CD4-positive, alpha-beta memory T cell (primary cell): ENCODE measurements at regions of chr10 and their contacts with region 1.

Region 1: DNA sequence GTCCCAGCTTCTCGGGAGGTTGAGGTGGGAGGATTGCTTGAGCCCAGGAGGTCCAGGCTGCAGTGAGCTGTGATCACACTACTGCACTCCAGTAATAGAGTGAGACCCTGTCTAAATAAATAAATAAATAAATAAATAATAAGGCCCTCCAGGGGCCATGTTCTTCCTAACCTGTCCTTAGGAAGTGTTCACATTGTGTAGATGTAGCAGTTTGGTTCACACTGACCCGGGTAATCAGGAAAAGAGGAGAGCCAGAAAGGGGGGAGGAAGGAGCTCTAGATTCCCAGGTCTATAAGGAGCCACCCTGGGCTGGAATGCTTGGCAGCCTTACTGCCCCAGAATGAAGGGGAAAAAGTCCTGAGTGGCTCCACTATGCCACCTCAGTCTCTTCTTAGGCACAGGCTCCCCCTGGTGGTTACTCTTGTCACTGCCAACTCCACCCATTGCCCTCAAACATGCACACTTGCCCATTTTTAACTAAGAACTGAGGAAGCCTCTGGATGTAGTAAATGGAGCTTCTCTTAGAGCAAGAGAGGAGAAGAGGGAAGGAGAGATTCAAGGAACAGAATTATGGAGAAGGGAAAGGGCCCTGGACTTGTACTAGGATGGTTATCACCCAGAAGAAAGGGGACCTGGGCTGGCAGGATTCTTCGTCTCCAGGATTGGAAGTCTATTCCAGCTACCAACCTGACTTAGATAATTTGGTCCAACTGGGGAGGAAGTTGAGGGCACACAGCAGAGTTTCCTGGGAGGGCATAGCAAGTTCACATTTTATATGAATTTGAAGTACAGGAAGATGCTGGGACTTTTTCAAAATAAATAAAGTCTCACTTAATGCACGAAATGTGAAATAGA is 7.8 kb downstream of the HPS6 start:
- DNase-seq: peak; percentile 67 to 76 (median 75)
- H3K4me3 ChIP-seq: no peak overlapping the region
- H3K4me3 Mint-ChIP-seq: no peak overlapping the region
- H3K27ac ChIP-seq: no peak overlapping the region
- H3K27ac Mint-ChIP-seq: no peak overlapping the region
- H3K4me1 ChIP-seq: peaks cover 14% of the 10 kb centered on the region
- H3K4me1 Mint-ChIP-seq: peaks cover 3 to 17% (median 7%) of the 10 kb centered on the region in 4 donors
- H3K27me3 ChIP-seq: no peaks in the 10 kb centered on the region
- H3K27me3 Mint-ChIP-seq: no peaks in the 10 kb centered on the region

Region 2: GRCh38 chr10:101889256-101890210 is 183.4 kb before region 1 on chr10:
- CTCF ChIA-PET with region 1: interaction called, 48 read pairs
- POLR2A ChIA-PET with region 1: interaction called, 3 read pairs
- intact Hi-C with region 1: loop called (anchors 1 kb)
- DNase-seq: peak; percentile 42 to 61 (median 52)
- H3K4me3 ChIP-seq: no peak overlapping the region
- H3K4me3 Mint-ChIP-seq: no peak overlapping the region
- H3K27ac ChIP-seq: no peak overlapping the region
- H3K27ac Mint-ChIP-seq: peak overlapping the region in 3 of 7 donors; percentile 3 to 5 (median 3)
- H3K4me1 ChIP-seq: no peaks in the 10 kb centered on the region
- H3K4me1 Mint-ChIP-seq: peaks cover 0 to 4% (median under 1%) of the 10 kb centered on the region in 4 donors
- H3K27me3 ChIP-seq: no peaks in the 10 kb centered on the region
- H3K27me3 Mint-ChIP-seq: no peaks in the 10 kb centered on the region

Region 3: DNA sequence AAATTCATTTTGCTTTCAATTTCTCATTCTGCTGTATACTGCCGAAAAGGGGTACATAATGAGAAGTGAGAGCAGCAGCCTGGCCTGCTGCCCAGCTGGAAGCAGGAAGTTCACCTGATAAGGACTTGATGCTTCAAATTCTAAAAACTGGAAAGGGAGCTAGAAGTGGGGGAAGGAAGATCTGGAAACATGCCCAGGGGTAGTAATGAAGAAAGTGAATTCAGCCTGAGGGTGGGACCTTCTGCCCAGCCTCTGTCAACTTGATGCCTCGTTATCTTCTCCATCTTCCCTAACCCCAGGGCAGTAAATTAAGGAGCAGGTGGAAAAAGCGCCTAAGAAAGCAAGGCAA is 86.3 kb before region 1 on chr10:
- CTCF ChIA-PET with region 1: no interaction called
- POLR2A ChIA-PET with region 1: no interaction called
- intact Hi-C with region 1: no loop called
- DNase-seq: no peak
- H3K4me3 ChIP-seq: no peak overlapping the region
- H3K4me3 Mint-ChIP-seq: no peak overlapping the region
- H3K27ac ChIP-seq: no peak overlapping the region
- H3K27ac Mint-ChIP-seq: peak overlapping the region in 3 of 7 donors; percentile 17 to 58 (median 20)
- H3K4me1 ChIP-seq: no peaks in the 10 kb centered on the region
- H3K4me1 Mint-ChIP-seq: peaks cover 0 to 9% (median 4%) of the 10 kb centered on the region in 4 donors
- H3K27me3 ChIP-seq: no peaks in the 10 kb centered on the region
- H3K27me3 Mint-ChIP-seq: no peaks in the 10 kb centered on the region

Region 4: DNA sequence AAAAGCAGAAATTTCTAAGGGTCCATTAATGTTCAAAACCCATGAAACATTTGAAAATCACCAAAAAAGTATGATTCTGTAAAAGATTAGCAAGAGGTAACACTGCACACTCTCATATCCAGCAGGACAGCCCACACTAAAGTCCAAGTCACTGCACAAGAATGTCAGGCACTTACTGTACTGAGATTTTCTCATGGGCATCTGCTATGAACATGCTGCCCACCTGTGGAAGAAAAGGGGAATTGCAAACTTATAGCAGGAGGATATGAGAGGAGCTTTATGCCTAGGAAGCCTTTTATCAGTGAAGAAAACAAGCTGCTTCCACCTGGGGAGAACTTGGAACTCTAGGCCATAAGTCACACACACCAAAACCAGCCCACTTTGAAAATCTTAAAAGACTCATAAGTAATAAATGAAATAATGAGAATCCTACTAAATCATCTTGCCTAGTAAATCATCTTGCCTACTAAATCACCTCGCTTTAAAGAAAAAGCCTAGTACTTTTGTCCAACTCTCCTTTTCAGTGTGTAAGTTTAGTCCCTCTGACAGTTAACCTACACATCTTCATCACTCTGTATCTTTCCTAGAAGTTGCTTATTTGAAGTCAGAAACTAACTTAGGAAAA is 63.0 kb before region 1 on chr10:
- CTCF ChIA-PET with region 1: interaction called, 37 read pairs
- POLR2A ChIA-PET with region 1: no interaction called
- intact Hi-C with region 1: loop called (anchors 1 kb)
- DNase-seq: peak; percentile 48 to 61 (median 53)
- H3K4me3 ChIP-seq: no peak overlapping the region
- H3K4me3 Mint-ChIP-seq: no peak overlapping the region
- H3K27ac ChIP-seq: no peak overlapping the region
- H3K27ac Mint-ChIP-seq: peak overlapping the region in 4 of 7 donors; percentile 3 to 67 (median 38)
- H3K4me1 ChIP-seq: no peaks in the 10 kb centered on the region
- H3K4me1 Mint-ChIP-seq: peaks cover 0 to 5% (median 4%) of the 10 kb centered on the region in 4 donors
- H3K27me3 ChIP-seq: no peaks in the 10 kb centered on the region
- H3K27me3 Mint-ChIP-seq: no peaks in the 10 kb centered on the region

Region 5: DNA sequence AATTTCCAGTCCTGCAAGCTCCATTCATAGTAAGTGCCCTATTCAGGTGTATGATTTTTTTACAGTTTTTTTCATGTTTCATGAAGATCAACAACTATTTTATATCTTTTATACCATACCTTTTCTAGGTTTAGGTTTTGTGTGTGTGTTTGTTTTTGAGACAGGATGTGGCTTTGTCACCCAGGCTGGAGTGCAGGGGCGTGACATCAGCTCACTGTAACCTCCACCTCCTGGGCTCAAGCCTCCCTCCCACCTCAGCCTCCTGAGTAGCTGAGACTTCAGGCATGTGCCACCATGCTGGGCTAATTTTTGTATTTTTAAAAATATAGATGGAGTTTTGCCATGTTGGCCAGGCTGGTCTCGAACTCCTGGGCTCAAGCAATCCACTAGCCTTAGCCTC is 52.0 kb before region 1 on chr10:
- CTCF ChIA-PET with region 1: interaction called, 13 read pairs
- POLR2A ChIA-PET with region 1: no interaction called
- intact Hi-C with region 1: no loop called
- DNase-seq: no peak
- H3K4me3 ChIP-seq: no peak overlapping the region
- H3K4me3 Mint-ChIP-seq: no peak overlapping the region
- H3K27ac ChIP-seq: no peak overlapping the region
- H3K27ac Mint-ChIP-seq: no peak overlapping the region
- H3K4me1 ChIP-seq: no peaks in the 10 kb centered on the region
- H3K4me1 Mint-ChIP-seq: peaks cover 0 to 4% (median 2%) of the 10 kb centered on the region in 4 donors
- H3K27me3 ChIP-seq: no peaks in the 10 kb centered on the region
- H3K27me3 Mint-ChIP-seq: no peaks in the 10 kb centered on the region

Region 6: GRCh38 chr10:102055647-102056419 is 17.1 kb before region 1 on chr10 and contains the start of gene ARMH3:
- CTCF ChIA-PET with region 1: interaction called, 21 read pairs
- POLR2A ChIA-PET with region 1: interaction called, 49 read pairs
- intact Hi-C with region 1: no loop called
- DNase-seq: peak; percentile 89 to 92 (median 90)
- H3K4me3 ChIP-seq: peak within 1 kb of the TSS; percentile 89 to 99
- H3K4me3 Mint-ChIP-seq: peak within 1 kb of the TSS; percentile 95 to 98 (median 96)
- H3K27ac ChIP-seq: peak within 1 kb of the TSS; percentile 88
- H3K27ac Mint-ChIP-seq: peak within 1 kb of the TSS; percentile 94 to 99 (median 97)
- H3K4me1 ChIP-seq: peaks cover 51% of the 10 kb centered on the region
- H3K4me1 Mint-ChIP-seq: peaks cover 31 to 54% (median 42%) of the 10 kb centered on the region in 4 donors
- H3K27me3 ChIP-seq: no peaks in the 10 kb centered on the region
- H3K27me3 Mint-ChIP-seq: no peaks in the 10 kb centered on the region
- total RNA-seq, gene ARMH3: 31.4 to 31.8 TPM

Region 7: DNA sequence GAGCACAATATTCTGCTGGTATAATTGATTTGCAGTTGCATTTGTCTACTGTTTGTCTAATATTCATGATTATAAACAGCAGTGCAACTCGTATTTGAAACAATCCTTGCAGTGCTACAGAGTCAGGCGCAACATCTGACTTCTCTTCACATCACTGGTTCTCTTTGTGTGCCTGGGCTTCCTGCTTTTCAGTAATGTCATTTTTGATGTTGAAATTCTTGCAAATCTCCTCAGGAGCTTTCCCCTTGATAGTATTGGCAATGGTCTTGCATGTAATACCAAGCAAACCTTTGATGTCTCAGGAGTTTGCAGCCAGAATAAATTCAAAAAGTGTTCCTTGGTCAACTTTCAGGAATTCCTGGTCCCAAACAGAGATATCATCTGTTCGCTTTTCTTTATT is 12.4 kb after region 1 on chr10:
- CTCF ChIA-PET with region 1: interaction called, 13 read pairs
- POLR2A ChIA-PET with region 1: interaction called, 3 read pairs
- intact Hi-C with region 1: no loop called
- DNase-seq: no peak
- H3K4me3 ChIP-seq: no peak overlapping the region
- H3K4me3 Mint-ChIP-seq: no peak overlapping the region
- H3K27ac ChIP-seq: no peak overlapping the region
- H3K27ac Mint-ChIP-seq: no peak overlapping the region
- H3K4me1 ChIP-seq: no peaks in the 10 kb centered on the region
- H3K4me1 Mint-ChIP-seq: no peaks in the 10 kb centered on the region
- H3K27me3 ChIP-seq: no peaks in the 10 kb centered on the region
- H3K27me3 Mint-ChIP-seq: no peaks in the 10 kb centered on the region

Region 8: DNA sequence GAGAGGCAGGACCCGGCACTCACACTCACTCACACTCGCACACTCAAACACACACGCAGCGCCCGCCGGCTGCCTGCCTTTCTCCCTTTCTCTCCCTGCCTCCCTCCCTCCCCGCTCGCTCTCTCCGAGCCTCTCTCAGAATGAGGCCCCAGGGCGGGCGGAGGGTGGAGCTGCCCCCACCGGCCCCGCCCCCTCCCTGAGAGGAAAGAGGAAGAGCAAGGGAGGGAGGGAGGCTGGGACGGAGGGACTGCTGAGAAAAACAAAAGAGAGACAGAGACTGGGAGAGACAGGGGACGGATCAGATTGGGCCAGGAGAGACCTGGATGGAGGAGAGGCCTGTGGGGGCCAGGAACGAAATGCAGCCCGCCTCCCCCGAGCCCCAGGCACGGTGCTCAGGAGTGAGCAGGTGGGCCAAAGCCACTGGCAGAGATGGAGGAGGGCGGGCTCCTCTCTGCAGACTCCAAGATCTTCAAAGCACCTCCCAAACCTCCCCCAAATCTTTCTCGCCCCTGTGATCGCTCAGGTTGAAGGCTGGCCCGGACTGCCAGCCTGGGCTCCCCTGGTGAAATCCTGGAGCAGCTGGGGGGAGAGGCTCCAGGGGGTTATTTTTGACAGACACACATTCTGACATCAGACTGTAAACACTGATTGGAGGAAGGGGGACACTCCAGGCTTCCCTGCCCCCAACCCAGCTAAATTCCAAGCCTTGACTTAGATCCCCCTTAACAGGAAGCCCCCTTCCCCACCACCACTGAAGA is 42.1 kb after region 1 on chr10:
- CTCF ChIA-PET with region 1: interaction called, 16 read pairs
- POLR2A ChIA-PET with region 1: interaction called, 3 read pairs
- intact Hi-C with region 1: no loop called
- DNase-seq: peak; percentile 69 to 86 (median 73)
- H3K4me3 ChIP-seq: peak overlapping the region; percentile 50 to 54
- H3K4me3 Mint-ChIP-seq: peak overlapping the region; percentile 85 to 97 (median 93)
- H3K27ac ChIP-seq: peak overlapping the region; percentile 90
- H3K27ac Mint-ChIP-seq: peak overlapping the region; percentile 89 to 97 (median 96)
- H3K4me1 ChIP-seq: peaks cover 67% of the 10 kb centered on the region
- H3K4me1 Mint-ChIP-seq: peaks cover 44 to 77% (median 61%) of the 10 kb centered on the region in 4 donors
- H3K27me3 ChIP-seq: no peaks in the 10 kb centered on the region
- H3K27me3 Mint-ChIP-seq: no peaks in the 10 kb centered on the region